Activated T-helper 1 cell treated with anti-CD3 and anti-CD28 coated beads, Interleukin-12 subunit alpha, Interleukin-12 subunit beta, Interleukin-2, Interleukin-4 antibody, amounts not matched to agents 30 ng/mL and 10 ng/mL and 1 ng/mL, durations not matched to agents 14 hours and 24 hours and 36 hours (primary cell): ENCODE measurements at regions of chr18 and their contacts with region 1.

Region 1: DNA sequence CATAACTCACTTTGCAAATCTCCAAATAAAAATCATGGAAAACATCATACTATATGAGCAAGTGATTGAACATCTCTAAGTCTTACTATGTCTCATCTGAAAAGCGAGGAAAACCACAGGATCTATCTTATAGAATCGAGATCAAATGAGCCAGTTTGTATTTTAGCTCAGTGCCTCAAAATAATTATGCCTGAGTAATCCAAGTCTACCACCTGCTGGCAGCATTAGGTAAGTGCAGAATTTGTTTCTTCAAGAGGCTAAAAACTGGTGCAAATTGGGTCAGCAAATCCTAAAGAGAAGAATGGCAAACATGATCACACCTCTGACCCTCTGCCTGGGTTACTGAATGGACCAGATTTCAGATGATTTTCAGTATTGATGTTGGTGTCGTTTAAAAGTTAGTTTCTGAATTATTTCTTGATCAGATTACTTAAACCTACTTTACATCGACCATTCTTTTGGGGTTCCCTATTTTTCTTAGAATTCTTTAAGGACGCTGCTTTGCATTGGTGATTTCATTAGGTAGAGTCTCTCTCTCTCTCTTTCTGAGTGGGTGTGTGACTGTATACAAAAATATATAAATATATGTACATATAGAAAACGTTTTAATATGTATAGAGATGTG is 12.7 kb upstream of the FHOD3 start:
- DNase-seq: peak; percentile 19
- H3K4me3 Mint-ChIP-seq: no peak overlapping the region
- H3K27ac Mint-ChIP-seq: no peak overlapping the region
- H3K4me1 Mint-ChIP-seq: no peaks in the 10 kb centered on the region
- H3K27me3 Mint-ChIP-seq: peaks cover 15% of the 10 kb centered on the region

Region 2: GRCh38 chr18:35386600-35387351 is 898.0 kb before region 1 on chr18:
- intact Hi-C with region 1: loop called (anchors 2 kb)
- DNase-seq: peak; percentile 56
- H3K4me3 Mint-ChIP-seq: no peak overlapping the region
- H3K27ac Mint-ChIP-seq: no peak overlapping the region
- H3K4me1 Mint-ChIP-seq: peaks cover 9% of the 10 kb centered on the region
- H3K27me3 Mint-ChIP-seq: peaks cover 21% of the 10 kb centered on the region

Region 3: DNA sequence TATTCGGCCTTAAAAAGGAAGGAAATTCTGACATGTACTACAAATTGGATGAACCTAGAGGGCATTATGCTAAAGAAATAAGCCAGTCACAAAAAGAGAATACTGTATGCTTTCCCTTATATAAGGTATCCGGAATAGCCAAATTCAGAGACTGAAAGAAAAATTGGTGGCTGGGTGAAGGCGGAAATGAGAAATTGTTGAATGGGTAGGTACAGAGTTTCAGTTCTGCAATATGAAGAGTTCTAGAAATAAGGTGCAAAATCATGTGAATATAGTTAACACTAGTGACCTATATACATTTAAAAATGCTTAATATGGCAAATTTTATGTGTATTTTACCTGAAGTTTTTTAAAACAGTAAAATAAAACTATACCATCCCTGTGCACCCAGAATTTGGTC is 269.2 kb before region 1 on chr18:
- intact Hi-C with region 1: loop called (anchors 1 kb)
- DNase-seq: no peak
- H3K4me3 Mint-ChIP-seq: no peak overlapping the region
- H3K27ac Mint-ChIP-seq: no peak overlapping the region
- H3K4me1 Mint-ChIP-seq: no peaks in the 10 kb centered on the region
- H3K27me3 Mint-ChIP-seq: no peaks in the 10 kb centered on the region

Region 4: GRCh38 chr18:36095936-36096519 is 188.8 kb before region 1 on chr18:
- intact Hi-C with region 1: loop called (anchors 1 kb)
- DNase-seq: no peak
- H3K4me3 Mint-ChIP-seq: no peak overlapping the region
- H3K27ac Mint-ChIP-seq: no peak overlapping the region
- H3K4me1 Mint-ChIP-seq: peaks cover 7% of the 10 kb centered on the region
- H3K27me3 Mint-ChIP-seq: peaks cover 14% of the 10 kb centered on the region

Region 5: DNA sequence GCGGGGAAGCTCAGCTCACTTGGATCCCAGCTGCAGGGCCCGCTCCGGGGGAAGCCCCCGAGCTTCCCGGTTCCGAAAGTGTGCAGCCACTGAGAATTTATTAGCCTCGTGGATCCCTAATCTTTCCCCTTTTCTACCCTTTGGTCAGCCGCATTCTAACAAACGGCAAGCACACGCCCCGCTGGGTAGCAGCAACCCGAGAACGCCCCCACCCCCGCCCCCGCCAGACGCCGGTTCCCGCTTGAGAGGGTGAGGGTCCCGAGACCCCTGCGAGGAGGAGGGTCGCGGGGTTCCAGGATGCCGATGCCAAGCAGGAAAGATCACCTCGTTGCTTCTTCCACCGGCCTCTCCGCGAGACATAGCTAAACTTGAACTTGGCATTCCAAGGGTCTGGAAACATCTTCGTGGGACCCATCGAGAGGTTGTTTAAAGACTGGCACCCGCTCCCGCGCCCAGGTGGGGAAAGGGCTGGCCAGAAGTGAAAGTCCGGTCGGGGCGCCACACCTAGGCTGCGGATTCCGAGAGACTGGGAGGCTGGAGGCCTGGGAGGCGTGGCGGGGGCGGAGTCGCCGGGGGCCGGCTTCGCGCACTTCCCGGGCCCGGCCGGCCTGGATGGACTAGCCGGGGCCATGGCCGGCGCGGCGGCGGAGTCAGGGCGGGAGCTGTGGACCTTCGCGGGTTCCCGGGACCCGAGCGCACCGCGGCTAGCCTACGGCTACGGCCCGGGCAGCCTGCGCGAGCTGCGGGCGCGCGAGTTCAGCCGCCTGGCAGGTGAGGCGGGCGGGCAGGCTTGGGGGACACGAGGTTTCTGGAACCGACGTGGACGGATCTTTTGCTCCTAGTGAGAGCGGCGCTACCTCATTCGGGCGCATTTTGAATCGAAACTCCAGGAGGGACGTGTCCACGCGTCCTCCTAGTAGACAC is 97.6 kb before region 1 on chr18 and contains the start of gene MOCOS:
- intact Hi-C with region 1: loop called (anchors 5 kb)
- DNase-seq: peak; percentile 43
- H3K4me3 Mint-ChIP-seq: peak within 1 kb of the TSS; percentile 82
- H3K27ac Mint-ChIP-seq: no peak within 1 kb of the TSS
- H3K4me1 Mint-ChIP-seq: peaks cover 7% of the 10 kb centered on the region
- H3K27me3 Mint-ChIP-seq: peaks cover 20% of the 10 kb centered on the region
- total RNA-seq, gene MOCOS: 0.17 and 0.47 TPM in 2 replicates